ENCODE measurements at regions of chr2 and their contacts with region 1.

Region 1: GRCh38 chr2:96336104-96336775 is 674 bp downstream of the NCAPH start:
- DNase-seq: no peak
- H3K4me3 Mint-ChIP-seq: peak overlapping the region; percentile 91
- H3K27ac Mint-ChIP-seq: peak overlapping the region; percentile 91
- H3K4me1 Mint-ChIP-seq: peaks cover 65% of the 10 kb centered on the region
- H3K27me3 Mint-ChIP-seq: no peaks in the 10 kb centered on the region

Region 2: DNA sequence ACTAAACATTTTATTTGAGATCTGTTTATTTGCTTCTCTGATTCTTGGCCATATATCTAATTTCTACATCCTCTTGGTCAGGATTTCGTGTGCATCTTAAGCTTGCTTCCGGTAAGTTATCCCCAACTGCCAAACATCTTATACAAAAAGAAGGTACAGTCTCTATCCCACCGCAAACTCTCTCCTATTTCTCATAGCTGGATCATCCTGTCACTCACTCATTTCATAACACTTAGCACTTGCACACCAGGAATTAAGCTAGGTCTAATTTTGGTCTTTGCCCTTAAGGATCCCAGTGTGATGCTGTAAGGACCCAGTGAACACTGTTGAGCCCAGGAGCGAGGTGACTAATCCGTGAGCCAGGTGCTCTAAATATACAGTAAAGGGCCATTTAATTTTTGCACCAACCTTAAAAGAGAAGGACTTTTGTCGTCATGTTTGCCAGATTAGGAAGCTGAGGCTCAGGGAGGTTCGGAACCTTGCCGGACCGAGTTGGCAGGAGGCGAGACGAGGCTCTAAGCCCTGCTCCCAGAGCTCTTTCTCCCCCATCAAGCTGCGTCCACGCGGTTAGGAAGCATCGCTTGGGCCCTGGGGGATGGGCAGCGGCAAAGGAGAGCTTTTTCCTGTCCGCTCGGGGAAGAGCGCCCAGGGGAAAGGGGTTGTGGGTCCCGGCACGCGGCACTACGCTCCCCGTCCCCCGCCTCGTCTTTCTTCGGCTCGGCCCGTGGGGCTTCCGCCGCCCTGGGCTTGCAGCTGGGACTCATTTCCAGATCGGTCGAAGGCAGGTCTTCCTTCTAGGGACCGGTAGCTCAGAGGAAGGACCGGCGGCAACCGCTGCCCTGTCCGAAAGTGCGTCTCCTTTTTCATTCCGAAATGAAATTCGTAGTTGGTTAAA is 15.3 kb before region 1 on chr2:
- CTCF ChIA-PET with region 1: interaction called, 13 read pairs
- DNase-seq: peak; percentile 62
- H3K4me3 Mint-ChIP-seq: peak overlapping the region; percentile 72
- H3K27ac Mint-ChIP-seq: peak overlapping the region; percentile 92
- H3K4me1 Mint-ChIP-seq: peaks cover 69% of the 10 kb centered on the region
- H3K27me3 Mint-ChIP-seq: no peaks in the 10 kb centered on the region

Region 3: DNA sequence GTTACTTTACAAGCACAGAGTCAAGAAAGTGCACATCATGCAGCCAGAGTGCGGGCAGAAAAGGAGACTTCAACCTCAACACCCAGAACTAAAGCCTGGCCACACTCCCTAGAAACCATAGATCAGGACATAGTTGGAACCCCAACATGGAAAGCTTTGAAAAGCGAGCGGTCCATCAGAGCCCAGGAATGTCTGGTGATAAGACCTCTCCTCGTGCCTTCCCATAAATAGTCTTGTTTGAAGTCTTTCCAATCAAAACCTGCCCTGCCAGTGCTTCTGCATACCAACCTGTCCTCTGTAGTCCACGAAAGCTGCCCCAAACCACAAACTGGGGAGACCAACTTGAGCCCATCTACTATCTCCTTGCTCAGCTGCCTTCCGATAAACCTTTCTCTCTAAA is 113.4 kb after region 1 on chr2:
- CTCF ChIA-PET with region 1: no interaction called
- DNase-seq: no peak
- H3K4me3 Mint-ChIP-seq: no peak overlapping the region
- H3K27ac Mint-ChIP-seq: no peak overlapping the region
- H3K4me1 Mint-ChIP-seq: no peaks in the 10 kb centered on the region
- H3K27me3 Mint-ChIP-seq: peaks cover 4% of the 10 kb centered on the region

Region 4: DNA sequence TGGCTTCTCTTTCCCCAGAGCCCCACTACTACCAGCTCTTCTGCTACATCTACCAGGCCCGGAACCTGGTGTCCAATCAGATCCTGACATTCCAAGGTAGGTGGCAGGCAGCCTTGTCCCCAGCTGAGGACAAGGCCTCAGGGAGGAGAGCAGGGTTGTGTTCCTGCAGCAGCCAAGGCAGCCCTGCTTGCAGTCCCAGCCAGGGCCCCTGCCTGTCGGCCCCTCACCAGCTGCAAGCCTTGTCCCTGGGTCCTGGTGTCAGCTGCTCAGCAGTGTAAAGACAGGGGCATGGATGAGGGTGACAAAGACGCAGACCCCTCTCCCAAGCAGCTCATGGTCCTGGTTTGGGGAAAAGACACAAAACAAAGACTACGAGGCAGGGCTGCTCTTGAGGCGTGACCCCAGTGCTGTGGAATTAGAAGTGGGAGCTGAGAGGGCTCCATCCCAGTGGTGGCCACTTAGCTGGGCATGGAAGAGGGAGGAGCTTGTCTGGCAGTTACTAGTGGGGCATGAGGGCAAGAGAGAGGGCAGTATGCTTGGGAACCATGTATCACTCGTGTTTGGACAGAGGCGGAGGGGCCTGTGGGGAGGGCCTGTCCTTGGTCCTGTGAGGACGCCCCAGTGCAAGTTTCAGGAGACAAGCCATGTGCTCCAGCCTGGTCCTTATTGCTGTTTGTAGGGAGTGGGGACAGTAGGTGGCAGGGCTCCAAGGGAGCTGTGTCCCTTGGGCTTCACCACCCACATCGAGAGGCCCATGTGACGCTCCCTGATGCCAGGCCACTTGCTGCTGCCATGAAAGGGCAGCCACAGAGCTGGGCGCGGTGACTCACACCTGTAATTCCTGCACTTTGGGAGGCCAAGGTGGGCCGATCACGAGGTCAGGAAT is 356.1 kb after region 1 on chr2:
- CTCF ChIA-PET with region 1: no interaction called
- DNase-seq: no peak
- H3K4me3 Mint-ChIP-seq: no peak overlapping the region
- H3K27ac Mint-ChIP-seq: no peak overlapping the region
- H3K4me1 Mint-ChIP-seq: no peaks in the 10 kb centered on the region
- H3K27me3 Mint-ChIP-seq: no peaks in the 10 kb centered on the region